ENCODE measurements at regions of chr5 and their contacts with region 1.

Region 1: DNA sequence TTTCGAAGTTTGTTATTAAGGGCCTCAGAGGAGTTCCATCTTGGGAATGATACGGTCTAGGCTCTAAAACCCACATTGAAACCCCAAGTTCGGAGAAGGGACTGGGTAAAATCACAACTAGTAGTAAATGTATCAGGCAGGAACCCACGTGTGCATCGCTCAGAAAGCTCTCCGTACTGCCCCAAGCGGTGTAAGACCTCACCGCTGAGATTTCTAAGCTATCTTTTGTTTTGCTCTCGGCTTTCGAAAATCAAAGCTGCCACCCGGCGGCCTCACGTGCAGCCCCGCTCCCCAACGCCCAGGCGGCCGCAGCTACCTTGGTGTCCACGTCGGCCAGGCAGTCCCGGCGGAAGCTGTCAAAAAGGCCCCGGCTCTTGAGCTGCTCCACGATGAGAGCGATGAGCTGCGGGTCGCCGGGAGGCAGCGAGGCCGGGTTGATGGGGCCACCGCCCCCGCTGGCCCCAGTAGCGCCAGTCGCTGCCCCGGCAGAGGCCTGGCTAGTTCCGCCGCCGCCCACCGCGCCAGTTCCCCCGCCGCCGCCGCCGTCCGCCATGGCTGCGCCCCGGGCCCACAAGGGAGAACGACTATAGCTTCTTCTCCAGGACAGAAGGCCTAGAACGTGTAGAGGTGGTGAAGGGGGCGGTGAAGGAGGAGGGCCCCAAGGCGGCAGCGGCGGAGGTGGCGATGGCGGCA is 420 bp downstream of the BOD1 start:
- DNase-seq: peak; percentile 58
- ATAC-seq: peak; percentile 61
- H3K4me3 ChIP-seq: peak overlapping the region; percentile 72 to 88
- H3K27ac ChIP-seq: peak overlapping the region; percentile 81
- H3K4me1 ChIP-seq: peaks cover 9 to 18% of the 10 kb centered on the region in 2 experiments; a peak in 3 of 4 replicates
- H3K27me3 ChIP-seq: no peaks in the 10 kb centered on the region
- CTCF ChIP-seq: peak; percentile 42 to 66 (median 62); a peak in 4 of 6 replicates
- POLR2A ChIP-seq: no peak
- RAD21 ChIP-seq: peak; percentile 30

Region 2: GRCh38 chr5:172707285-172708182 is 908.5 kb before region 1 on chr5:
- CTCF ChIA-PET with region 1: interaction called, 10 read pairs
- POLR2A ChIA-PET with region 1: no interaction called
- RAD21 ChIA-PET with region 1: no interaction called
- intact Hi-C with region 1: no loop called
- DNase-seq: no peak
- ATAC-seq: peak; percentile 98
- H3K4me3 ChIP-seq: no peak overlapping the region
- H3K27ac ChIP-seq: no peak overlapping the region
- H3K4me1 ChIP-seq: peaks cover 0 to 5% of the 10 kb centered on the region in 2 experiments; a peak in 1 of 4 replicates
- H3K27me3 ChIP-seq: no peaks in the 10 kb centered on the region; the same call in 1 of the 2 replicates
- CTCF ChIP-seq: peak in 2 of 3 experiments; percentile 66 to 74; a peak in 4 of 6 replicates
- POLR2A ChIP-seq: no peak
- RAD21 ChIP-seq: no peak

Region 3: DNA sequence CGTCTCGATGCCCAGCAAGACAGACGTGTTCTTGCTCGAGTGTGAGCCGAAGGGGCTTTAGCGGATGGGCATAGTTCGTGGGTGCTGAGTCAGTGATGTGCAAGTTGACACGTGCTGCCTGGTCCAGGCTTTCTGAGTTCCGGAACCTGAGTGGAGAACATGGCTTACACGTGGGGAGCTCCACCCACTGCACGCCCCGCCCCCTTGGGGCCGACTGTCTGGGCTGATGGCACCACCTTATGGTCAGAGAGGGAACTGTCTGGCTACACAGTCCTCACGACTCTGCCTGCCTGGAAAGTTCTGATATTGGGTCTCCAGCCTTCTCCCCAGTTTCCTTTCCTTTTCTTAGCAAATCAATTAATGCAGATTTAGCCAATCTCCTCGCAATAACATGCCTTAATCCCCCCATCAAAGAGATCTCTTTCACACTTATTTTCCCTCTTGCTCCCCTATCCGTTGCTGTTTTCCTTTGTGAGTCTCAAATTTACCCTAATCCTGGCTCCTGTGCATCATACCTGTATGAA is 284.0 kb before region 1 on chr5:
- CTCF ChIA-PET with region 1: interaction called, 4 read pairs
- POLR2A ChIA-PET with region 1: interaction called, 5 read pairs
- RAD21 ChIA-PET with region 1: no interaction called
- intact Hi-C with region 1: loop called (anchors 5 kb)
- DNase-seq: peak; percentile 77
- ATAC-seq: peak; percentile 57
- H3K4me3 ChIP-seq: no peak overlapping the region
- H3K27ac ChIP-seq: peak overlapping the region; percentile 14; the same call in 1 of the 2 replicates
- H3K4me1 ChIP-seq: peaks cover 14 to 44% of the 10 kb centered on the region in 2 experiments; a peak in 3 of 4 replicates
- H3K27me3 ChIP-seq: no peaks in the 10 kb centered on the region
- CTCF ChIP-seq: peak in 2 of 3 experiments; percentile 94 to 98; a peak in 4 of 6 replicates
- POLR2A ChIP-seq: no peak
- RAD21 ChIP-seq: no peak

Region 4: DNA sequence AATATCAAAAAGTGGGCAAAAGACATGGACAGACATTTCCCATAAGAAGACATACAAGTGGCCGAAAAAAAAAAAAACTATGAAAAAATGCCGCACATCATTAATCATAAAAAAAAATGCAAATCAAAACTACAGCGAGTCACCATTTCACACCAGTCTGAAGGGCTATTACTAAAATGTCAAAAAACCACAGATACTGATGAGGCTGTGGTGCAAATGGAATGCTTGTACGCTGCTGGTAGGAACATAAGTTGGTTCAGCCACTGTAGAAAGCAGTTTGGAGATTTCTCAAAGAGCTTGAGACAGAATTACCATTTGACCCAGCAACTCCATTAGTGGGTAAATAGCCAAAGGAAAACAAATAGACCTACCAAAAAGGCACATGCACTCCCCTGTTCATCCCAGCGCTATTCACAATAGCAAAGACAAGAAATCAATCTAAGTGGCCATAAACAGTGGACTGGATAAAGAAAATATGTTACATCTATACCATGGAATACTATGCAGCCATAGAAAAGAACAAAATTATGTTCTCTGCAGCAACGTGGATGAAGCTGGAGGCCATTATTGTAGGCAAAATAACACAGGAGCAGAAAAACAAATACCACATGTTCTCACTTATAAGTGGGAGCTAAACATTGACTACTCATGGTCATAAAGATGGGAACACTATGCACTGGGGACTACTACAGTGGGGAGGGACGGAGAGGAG is 111.0 kb after region 1 on chr5:
- CTCF ChIA-PET with region 1: no interaction called
- POLR2A ChIA-PET with region 1: no interaction called
- RAD21 ChIA-PET with region 1: no interaction called
- intact Hi-C with region 1: no loop called
- DNase-seq: no peak
- ATAC-seq: no peak
- H3K4me3 ChIP-seq: no peak overlapping the region
- H3K27ac ChIP-seq: no peak overlapping the region
- H3K4me1 ChIP-seq: no peaks in the 10 kb centered on the region
- H3K27me3 ChIP-seq: no peaks in the 10 kb centered on the region
- CTCF ChIP-seq: no peak
- POLR2A ChIP-seq: no peak
- RAD21 ChIP-seq: no peak

Region 5: GRCh38 chr5:173972925-173973615 is 357.0 kb after region 1 on chr5:
- CTCF ChIA-PET with region 1: interaction called, 73 read pairs
- POLR2A ChIA-PET with region 1: interaction called, 4 read pairs
- RAD21 ChIA-PET with region 1: interaction called in 1 of 2 experiments, 6 read pairs
- intact Hi-C with region 1: loop called (anchors 1 kb)
- DNase-seq: peak; percentile 64
- ATAC-seq: peak; percentile 87
- H3K4me3 ChIP-seq: peak overlapping the region; percentile 34 to 51
- H3K27ac ChIP-seq: peak overlapping the region; percentile 6; the same call in 1 of the 2 replicates
- H3K4me1 ChIP-seq: peaks cover 0 to 9% of the 10 kb centered on the region in 2 experiments; a peak in 2 of 4 replicates
- H3K27me3 ChIP-seq: no peaks in the 10 kb centered on the region
- CTCF ChIP-seq: peak; percentile 80 to 87 (median 85)
- POLR2A ChIP-seq: no peak
- RAD21 ChIP-seq: peak; percentile 93

Region 6: GRCh38 chr5:174045470-174046025 is 429.5 kb after region 1 on chr5 and contains the start of gene NSG2:
- CTCF ChIA-PET with region 1: no interaction called
- POLR2A ChIA-PET with region 1: no interaction called
- RAD21 ChIA-PET with region 1: no interaction called
- intact Hi-C with region 1: loop called (anchors 2 kb)
- DNase-seq: peak; percentile 86
- ATAC-seq: peak; percentile 100
- H3K4me3 ChIP-seq: no peak within 1 kb of the TSS
- H3K27ac ChIP-seq: no peak within 1 kb of the TSS
- H3K4me1 ChIP-seq: no peaks in the 10 kb centered on the region
- H3K27me3 ChIP-seq: peaks cover 25% of the 10 kb centered on the region
- CTCF ChIP-seq: peak; percentile 81 to 98 (median 81)
- POLR2A ChIP-seq: no peak
- RAD21 ChIP-seq: peak; percentile 98
- total RNA-seq, gene NSG2: not detected

Measured in HCT116 (cell line).